Activated CD4-positive, alpha-beta memory T cell treated with anti-CD3 and anti-CD28 coated beads for 36 hours (primary cell): ENCODE measurements at regions of chr17 and their contacts with region 1.

Region 1: DNA sequence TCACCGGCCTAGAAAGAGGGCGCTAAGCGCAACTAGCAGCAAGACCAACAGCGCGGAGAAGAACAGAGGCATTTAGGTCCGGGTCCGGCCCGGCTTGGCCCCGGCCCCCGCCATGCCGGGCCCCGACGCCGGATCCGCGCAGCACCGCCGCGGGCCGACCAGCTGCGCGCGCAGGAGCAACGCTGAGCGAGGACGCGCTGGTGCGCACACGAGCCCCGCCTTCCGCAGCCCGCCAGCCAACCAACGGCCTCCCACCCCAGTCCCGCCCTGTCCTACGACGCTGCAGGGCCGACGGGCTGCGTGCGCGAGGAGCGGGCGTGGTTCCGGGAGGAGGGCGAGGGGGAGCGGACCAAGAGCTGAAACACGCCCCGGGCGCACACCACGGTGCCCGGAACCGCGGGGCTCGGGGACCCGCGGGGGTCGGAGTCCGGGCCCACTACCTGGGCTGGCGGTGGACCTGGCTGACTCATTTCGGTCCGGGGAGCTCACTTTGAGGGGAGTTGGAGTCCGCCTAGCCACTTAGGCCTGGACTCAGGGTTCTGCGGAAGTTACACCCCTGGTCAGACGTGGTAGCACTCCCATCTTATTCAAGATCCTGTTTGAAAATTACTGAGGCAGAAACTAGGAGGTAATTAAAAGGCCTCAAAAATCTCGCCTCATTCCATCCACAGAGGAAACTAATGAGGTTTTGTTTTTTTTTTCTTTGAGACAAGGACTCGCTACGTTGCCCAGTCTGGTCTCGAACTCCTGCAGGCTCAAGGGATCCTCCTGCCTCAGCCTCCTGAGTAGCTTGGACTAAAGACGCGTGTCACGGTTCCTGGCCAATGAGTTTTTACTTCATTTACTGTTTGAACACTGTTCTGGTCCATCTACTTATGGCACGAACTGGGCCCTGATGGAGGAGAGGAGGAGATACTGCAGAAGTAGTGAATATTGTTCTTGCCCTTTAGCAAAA is at the start of gene BLTP2:
- DNase-seq: peak; percentile 97
- H3K4me3 Mint-ChIP-seq: peak within 1 kb of the TSS; percentile 83
- H3K27ac Mint-ChIP-seq: peak within 1 kb of the TSS; percentile 86
- H3K4me1 Mint-ChIP-seq: peaks cover 39% of the 10 kb centered on the region
- H3K27me3 Mint-ChIP-seq: no peaks in the 10 kb centered on the region
- total RNA-seq, gene BLTP2: 127 to 133 TPM

Region 2: GRCh38 chr17:28528329-28529014 is 116.8 kb before region 1 on chr17:
- CTCF ChIA-PET with region 1: no interaction called
- POLR2A ChIA-PET with region 1: no interaction called
- intact Hi-C with region 1: no loop called
- DNase-seq: no peak
- H3K4me3 Mint-ChIP-seq: no peak overlapping the region
- H3K27ac Mint-ChIP-seq: no peak overlapping the region
- H3K4me1 Mint-ChIP-seq: no peaks in the 10 kb centered on the region
- H3K27me3 Mint-ChIP-seq: no peaks in the 10 kb centered on the region

Region 3: GRCh38 chr17:28634206-28634856 is 10.9 kb before region 1 on chr17:
- CTCF ChIA-PET with region 1: interaction called, 10 read pairs
- POLR2A ChIA-PET with region 1: no interaction called
- intact Hi-C with region 1: no loop called
- DNase-seq: no peak
- H3K4me3 Mint-ChIP-seq: no peak overlapping the region
- H3K27ac Mint-ChIP-seq: no peak overlapping the region
- H3K4me1 Mint-ChIP-seq: peaks cover 12% of the 10 kb centered on the region
- H3K27me3 Mint-ChIP-seq: no peaks in the 10 kb centered on the region

Region 4: DNA sequence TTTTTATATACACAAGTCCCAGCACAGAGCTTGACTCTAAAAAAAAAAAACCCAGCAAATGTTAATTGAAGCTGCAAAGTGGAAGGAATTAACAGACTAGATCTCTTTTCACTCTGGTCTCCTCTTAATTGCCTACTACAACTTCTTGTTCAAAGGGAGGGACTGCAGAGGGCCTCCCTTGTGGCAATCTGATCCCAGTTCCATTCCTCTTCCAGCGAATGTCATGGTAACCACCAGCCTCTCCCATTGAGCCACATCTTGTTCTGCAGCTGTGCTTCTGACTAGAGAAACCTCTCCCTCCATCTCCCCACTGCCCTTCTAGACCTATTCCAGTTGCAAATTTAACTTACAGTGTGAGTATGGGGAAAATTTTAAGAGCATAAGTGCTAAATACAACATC is 22.6 kb after region 1 on chr17:
- CTCF ChIA-PET with region 1: interaction called, 94 read pairs
- POLR2A ChIA-PET with region 1: interaction called, 32 read pairs
- intact Hi-C with region 1: no loop called
- DNase-seq: no peak
- H3K4me3 Mint-ChIP-seq: no peak overlapping the region
- H3K27ac Mint-ChIP-seq: no peak overlapping the region
- H3K4me1 Mint-ChIP-seq: peaks cover 38% of the 10 kb centered on the region
- H3K27me3 Mint-ChIP-seq: no peaks in the 10 kb centered on the region

Region 5: GRCh38 chr17:28710861-28711722 is 65.8 kb after region 1 on chr17:
- CTCF ChIA-PET with region 1: interaction called, 9 read pairs
- POLR2A ChIA-PET with region 1: interaction called, 10 read pairs
- intact Hi-C with region 1: loop called (anchors 2 kb)
- DNase-seq: peak; percentile 94
- H3K4me3 Mint-ChIP-seq: peak overlapping the region; percentile 73
- H3K27ac Mint-ChIP-seq: peak overlapping the region; percentile 80
- H3K4me1 Mint-ChIP-seq: peaks cover 23% of the 10 kb centered on the region
- H3K27me3 Mint-ChIP-seq: peaks cover 12% of the 10 kb centered on the region

Region 6: GRCh38 chr17:28902819-28903545 is 257.7 kb after region 1 on chr17 and contains the start of gene DHRS13:
- CTCF ChIA-PET with region 1: interaction called, 3 read pairs
- POLR2A ChIA-PET with region 1: interaction called, 4 read pairs
- intact Hi-C with region 1: loop called (anchors 10 kb)
- DNase-seq: peak; percentile 94
- H3K4me3 Mint-ChIP-seq: peak within 1 kb of the TSS; percentile 97
- H3K27ac Mint-ChIP-seq: peak within 1 kb of the TSS; percentile 89
- H3K4me1 Mint-ChIP-seq: peaks cover 27% of the 10 kb centered on the region
- H3K27me3 Mint-ChIP-seq: no peaks in the 10 kb centered on the region
- total RNA-seq, gene DHRS13: 18.0 to 20.6 TPM